ENCODE measurements at regions of chr3 and their contacts with region 1.

Region 1: GRCh38 chr3:126916546-126916945 is 66.4 kb upstream of the PLXNA1 start:
- DNase-seq: peak; percentile 21
- ATAC-seq: no peak

Region 2: GRCh38 chr3:126885425-126885824 is 31.1 kb before region 1 on chr3:
- intact Hi-C with region 1: loop called (anchors 1 kb)
- DNase-seq: no peak
- ATAC-seq: no peak